ENCODE measurements at regions of chr15 and their contacts with region 1.

Region 1: GRCh38 chr15:29821416-29822131 is 694 bp downstream of the TJP1 start:
- DNase-seq: peak; percentile 75
- H3K4me3 ChIP-seq: peak overlapping the region; percentile 78
- H3K27ac ChIP-seq: peak overlapping the region; percentile 99
- H3K4me1 ChIP-seq: peaks cover 55% of the 10 kb centered on the region
- H3K27me3 ChIP-seq: no peaks in the 10 kb centered on the region
- CTCF ChIP-seq: peak; percentile 47

Region 2: GRCh38 chr15:29031502-29032228 is 789.9 kb before region 1 on chr15:
- intact Hi-C with region 1: no loop called
- DNase-seq: no peak
- H3K4me3 ChIP-seq: no peak overlapping the region
- H3K27ac ChIP-seq: no peak overlapping the region
- H3K4me1 ChIP-seq: no peaks in the 10 kb centered on the region
- H3K27me3 ChIP-seq: no peaks in the 10 kb centered on the region
- CTCF ChIP-seq: no peak

Region 3: DNA sequence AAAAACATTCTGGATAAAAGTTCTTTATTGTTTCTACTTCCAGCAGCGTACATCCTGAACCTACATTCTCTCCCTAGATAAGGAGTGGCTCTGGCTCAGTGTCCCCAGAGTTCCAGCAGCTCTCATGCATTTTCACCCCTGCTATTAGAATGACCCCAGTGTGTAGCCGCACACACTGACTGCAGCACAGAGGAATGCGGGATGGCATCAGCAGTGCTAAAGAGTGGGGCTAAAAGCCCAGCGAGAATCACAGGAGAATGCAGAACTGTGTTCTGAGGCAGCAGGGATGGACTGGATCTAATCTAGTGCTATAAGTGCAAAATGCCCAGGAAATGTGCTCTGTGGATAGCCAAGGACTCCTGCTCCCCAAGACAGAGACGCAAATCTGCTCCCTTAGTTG is 67.1 kb after region 1 on chr15:
- intact Hi-C with region 1: loop called (anchors 10 kb)
- DNase-seq: no peak
- H3K4me3 ChIP-seq: no peak overlapping the region
- H3K27ac ChIP-seq: peak overlapping the region; percentile 63
- H3K4me1 ChIP-seq: peaks cover 55% of the 10 kb centered on the region
- H3K27me3 ChIP-seq: no peaks in the 10 kb centered on the region
- CTCF ChIP-seq: no peak

Region 4: GRCh38 chr15:29925227-29926082 is 103.9 kb after region 1 on chr15:
- intact Hi-C with region 1: loop called (anchors 5 kb)
- DNase-seq: peak; percentile 78
- H3K4me3 ChIP-seq: no peak overlapping the region
- H3K27ac ChIP-seq: peak overlapping the region; percentile 62
- H3K4me1 ChIP-seq: peaks cover 26% of the 10 kb centered on the region
- H3K27me3 ChIP-seq: no peaks in the 10 kb centered on the region
- CTCF ChIP-seq: peak; percentile 92

Measured in left ventricle myocardium inferior (tissue), 1 donor.